Activated CD8-positive, alpha-beta T cell treated with anti-CD3 and anti-CD28 coated beads, Interleukin-2, amount 10 ng/mL, durations not matched to agents 7 days and 5 days (primary cell): ENCODE measurements at regions of chr13 and their contacts with region 1.

Region 1: DNA sequence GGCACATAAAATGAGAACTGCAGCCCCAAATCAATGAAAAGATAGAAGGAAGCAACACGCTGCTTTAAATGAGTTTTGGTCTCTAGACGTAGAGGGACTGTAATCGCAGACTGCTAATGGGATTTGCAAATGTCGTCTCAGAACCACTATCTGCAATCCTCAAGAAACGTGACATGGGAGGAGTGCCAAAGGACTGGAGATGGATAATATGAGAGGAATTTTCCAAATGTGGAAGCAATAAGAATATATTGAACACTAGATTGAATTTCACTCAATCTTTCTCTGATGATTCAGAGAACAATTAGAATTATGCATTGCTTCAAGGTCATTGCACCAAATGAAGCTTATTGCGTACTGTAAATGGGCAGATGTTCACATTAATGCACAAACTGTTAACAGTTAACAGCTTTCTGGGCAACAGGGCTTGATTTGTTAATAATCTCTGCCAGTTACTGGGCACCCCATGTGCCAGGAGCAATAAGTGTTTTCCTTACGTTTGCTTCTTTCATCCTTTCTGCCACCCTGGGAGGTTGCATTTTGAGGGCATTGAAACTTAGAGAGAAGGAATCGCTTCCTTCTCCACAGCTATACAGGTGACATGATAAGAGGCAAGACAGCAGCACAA is 62.8 kb upstream of the WASF3 start:
- DNase-seq: no peak
- ATAC-seq: no peak
- H3K4me3 Mint-ChIP-seq: no peak overlapping the region
- H3K27ac Mint-ChIP-seq: no peak overlapping the region
- H3K4me1 Mint-ChIP-seq: no peaks in the 10 kb centered on the region
- H3K27me3 Mint-ChIP-seq: peaks cover 8% of the 10 kb centered on the region

Region 2: DNA sequence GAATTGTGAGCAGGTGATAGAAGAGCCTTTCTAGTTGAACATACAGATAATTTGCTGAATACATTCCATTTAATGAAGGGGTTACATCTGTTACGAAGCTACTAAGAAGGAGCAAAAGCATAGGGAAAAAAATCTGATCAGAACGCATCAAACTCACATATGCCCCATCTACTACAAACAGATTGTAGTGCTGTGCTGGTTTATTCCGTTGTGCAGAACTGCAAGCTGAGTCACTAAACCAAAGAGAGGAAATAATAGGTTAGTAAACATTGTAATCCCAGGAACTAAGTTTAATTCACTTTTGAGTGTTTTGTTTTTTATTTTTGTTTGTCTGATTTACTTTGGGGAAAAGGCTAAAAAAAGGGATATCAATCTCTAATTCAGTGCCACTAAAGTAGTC is 104.5 kb before region 1 on chr13:
- CTCF ChIA-PET with region 1: interaction called, 10 read pairs
- POLR2A ChIA-PET with region 1: no interaction called
- DNase-seq: no peak
- ATAC-seq: no peak
- H3K4me3 Mint-ChIP-seq: no peak overlapping the region
- H3K27ac Mint-ChIP-seq: no peak overlapping the region
- H3K4me1 Mint-ChIP-seq: peaks cover 5% of the 10 kb centered on the region
- H3K27me3 Mint-ChIP-seq: no peaks in the 10 kb centered on the region

Region 3: GRCh38 chr13:26482451-26483197 is 12.1 kb before region 1 on chr13:
- CTCF ChIA-PET with region 1: interaction called, 32 read pairs
- POLR2A ChIA-PET with region 1: no interaction called
- DNase-seq: peak; percentile 77
- ATAC-seq: peak; percentile 91
- H3K4me3 Mint-ChIP-seq: no peak overlapping the region
- H3K27ac Mint-ChIP-seq: peak overlapping the region; percentile 49
- H3K4me1 Mint-ChIP-seq: peaks cover 14% of the 10 kb centered on the region
- H3K27me3 Mint-ChIP-seq: no peaks in the 10 kb centered on the region

Region 4: GRCh38 chr13:26568132-26568815 is 73.6 kb after region 1 on chr13:
- CTCF ChIA-PET with region 1: no interaction called
- POLR2A ChIA-PET with region 1: no interaction called
- DNase-seq: no peak
- ATAC-seq: no peak
- H3K4me3 Mint-ChIP-seq: no peak overlapping the region
- H3K27ac Mint-ChIP-seq: no peak overlapping the region
- H3K4me1 Mint-ChIP-seq: no peaks in the 10 kb centered on the region
- H3K27me3 Mint-ChIP-seq: peaks cover 18% of the 10 kb centered on the region